ENCODE measurements at regions of chr20 and their contacts with region 1.

Region 1: GRCh38 chr20:5222919-5223634 is 93.7 kb downstream of the PROKR2 start:
- DNase-seq: peak; percentile 65 to 81
- ATAC-seq: peak; percentile 64
- H3K4me3 ChIP-seq: no peak overlapping the region
- H3K27ac ChIP-seq: no peak overlapping the region
- H3K4me1 ChIP-seq: no peaks in the 10 kb centered on the region
- H3K27me3 ChIP-seq: no peaks in the 10 kb centered on the region

Region 2: GRCh38 chr20:4985658-4986057 is 237.4 kb before region 1 on chr20:
- intact Hi-C with region 1: no loop called
- DNase-seq: no peak
- ATAC-seq: no peak
- H3K4me3 ChIP-seq: no peak overlapping the region
- H3K27ac ChIP-seq: no peak overlapping the region
- H3K4me1 ChIP-seq: peaks cover 0 to 3% of the 10 kb centered on the region in 2 donors
- H3K27me3 ChIP-seq: no peaks in the 10 kb centered on the region

Region 3: GRCh38 chr20:5448449-5449118 is 225.5 kb after region 1 on chr20:
- intact Hi-C with region 1: loop called in 1 of 2 experiments (anchors 10 kb)
- DNase-seq: no peak
- ATAC-seq: no peak
- H3K4me3 ChIP-seq: no peak overlapping the region
- H3K27ac ChIP-seq: no peak overlapping the region
- H3K4me1 ChIP-seq: no peaks in the 10 kb centered on the region
- H3K27me3 ChIP-seq: peaks cover 0 to 4% of the 10 kb centered on the region in 2 donors